PC-9 (cell line): ENCODE measurements at regions of chr2 and their contacts with region 1.

Region 1: DNA sequence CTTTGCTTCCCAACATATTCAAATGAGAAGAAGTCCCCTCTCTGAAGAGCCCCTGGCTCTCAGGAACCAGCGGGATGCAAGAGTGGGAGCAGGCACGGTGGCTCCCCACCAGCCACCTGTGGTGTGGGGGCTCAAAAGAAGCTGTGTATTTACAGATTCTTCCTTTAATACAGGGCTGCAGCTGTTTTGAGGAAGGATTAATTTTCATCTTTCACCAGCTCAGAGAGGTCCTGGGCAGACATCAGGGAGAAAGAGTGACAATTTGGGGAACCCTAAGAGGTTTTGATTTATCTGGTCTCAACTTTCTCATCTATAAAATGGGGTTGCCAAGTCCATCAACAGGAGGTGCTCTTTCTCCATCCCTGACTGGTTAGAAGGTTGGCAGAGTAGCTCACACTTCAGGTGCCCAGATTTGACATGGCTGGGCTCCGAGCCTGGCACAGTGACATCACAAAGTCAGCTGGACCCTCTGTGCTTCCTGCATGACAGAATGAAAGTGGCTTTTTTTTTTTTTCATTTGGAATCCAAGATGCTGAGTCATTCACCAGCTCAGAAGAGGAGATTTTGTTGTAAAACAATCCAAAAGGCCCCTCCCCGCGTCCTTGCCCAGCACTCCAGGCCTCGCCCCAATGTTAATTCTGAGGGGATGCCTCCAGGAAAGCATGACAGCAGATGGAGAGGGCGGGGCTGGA is 15.5 kb upstream of the SIX2 start:
- DNase-seq: peak; percentile 88 to 97
- H3K4me3 ChIP-seq: no peak overlapping the region
- H3K27ac ChIP-seq: no peak overlapping the region
- H3K4me1 ChIP-seq: peaks cover 11% of the 10 kb centered on the region
- H3K27me3 ChIP-seq: no peaks in the 10 kb centered on the region
- CTCF ChIP-seq: peak; percentile 86

Region 2: DNA sequence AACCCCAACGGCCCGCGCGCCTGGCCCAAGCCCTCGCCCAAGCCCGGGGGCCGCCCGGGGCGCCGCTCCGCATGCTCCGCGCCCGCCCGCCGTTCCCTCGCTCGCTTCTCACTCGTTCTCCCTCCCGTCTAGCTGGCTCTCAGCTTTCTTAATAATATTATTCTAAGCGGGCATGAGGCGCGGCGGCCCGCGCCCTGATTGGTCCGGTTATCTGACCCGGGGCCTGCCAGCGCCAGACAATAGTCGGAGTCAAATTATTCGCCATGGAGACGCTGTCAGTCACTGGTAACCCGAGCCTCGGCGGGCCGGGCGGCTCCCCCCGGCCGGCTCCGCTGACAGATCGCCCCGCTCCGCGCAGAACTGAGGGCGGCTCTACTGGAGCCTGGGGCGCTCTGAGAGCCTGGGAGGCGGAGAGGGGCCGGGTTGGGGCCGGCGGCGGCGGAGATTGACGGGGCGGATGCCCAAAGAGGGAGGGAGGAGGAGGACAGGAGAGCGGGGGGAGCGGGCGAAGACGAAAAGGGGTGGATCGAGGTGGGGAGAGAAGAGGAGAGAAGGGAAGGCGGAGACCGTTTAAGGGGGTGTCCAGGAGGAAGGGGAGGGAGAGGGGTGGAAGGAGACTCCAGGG is 15.3 kb before region 1 on chr2 and contains the start of gene SIX2:
- CTCF ChIA-PET with region 1: interaction called, 5 read pairs
- POLR2A ChIA-PET with region 1: interaction called, 16 read pairs
- intact Hi-C with region 1: no loop called
- DNase-seq: peak; percentile 98 to 99
- H3K4me3 ChIP-seq: peak within 1 kb of the TSS; percentile 69
- H3K27ac ChIP-seq: no peak within 1 kb of the TSS
- H3K4me1 ChIP-seq: peaks cover 23% of the 10 kb centered on the region
- H3K27me3 ChIP-seq: no peaks in the 10 kb centered on the region
- CTCF ChIP-seq: no peak
- total RNA-seq, gene SIX2: 10.2 and 11.9 TPM in 2 replicates

Region 3: GRCh38 chr2:45119855-45120254 is 95.1 kb after region 1 on chr2:
- CTCF ChIA-PET with region 1: interaction called, 5 read pairs
- POLR2A ChIA-PET with region 1: interaction called, 15 read pairs
- intact Hi-C with region 1: loop called (anchors 1 kb)
- DNase-seq: peak; percentile 67 to 100
- H3K4me3 ChIP-seq: no peak overlapping the region; the same call in 1 of the 2 replicates
- H3K27ac ChIP-seq: peak overlapping the region; percentile 85
- H3K4me1 ChIP-seq: peaks cover 63% of the 10 kb centered on the region
- H3K27me3 ChIP-seq: no peaks in the 10 kb centered on the region
- CTCF ChIP-seq: no peak

Region 4: DNA sequence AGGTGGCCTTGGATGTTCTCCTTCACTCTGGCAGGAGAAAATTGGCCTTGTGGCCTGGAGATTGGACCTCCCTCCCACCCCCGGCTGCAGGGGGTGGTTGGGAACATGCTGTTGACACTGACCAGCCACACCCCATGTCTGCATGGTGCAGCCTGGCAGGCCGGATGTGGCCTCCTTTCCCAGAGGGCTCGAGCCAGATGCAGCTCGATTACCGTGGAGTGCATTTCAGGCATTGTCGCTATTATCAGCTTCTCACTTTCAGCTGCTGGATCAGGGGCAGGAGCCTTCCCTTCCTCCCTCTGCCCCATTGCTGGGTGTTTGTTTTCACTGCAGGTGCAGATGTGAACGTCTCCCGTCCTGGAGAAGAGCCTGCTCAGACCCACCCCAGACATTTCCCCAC is 195.5 kb after region 1 on chr2:
- CTCF ChIA-PET with region 1: no interaction called
- POLR2A ChIA-PET with region 1: no interaction called
- intact Hi-C with region 1: loop called (anchors 2 kb)
- DNase-seq: peak; percentile 24 to 47
- H3K4me3 ChIP-seq: no peak overlapping the region
- H3K27ac ChIP-seq: no peak overlapping the region
- H3K4me1 ChIP-seq: peaks cover 30% of the 10 kb centered on the region
- H3K27me3 ChIP-seq: no peaks in the 10 kb centered on the region
- CTCF ChIP-seq: no peak

Region 5: GRCh38 chr2:45283764-45284620 is 259.2 kb after region 1 on chr2:
- CTCF ChIA-PET with region 1: no interaction called
- POLR2A ChIA-PET with region 1: no interaction called
- intact Hi-C with region 1: loop called (anchors 2 kb)
- DNase-seq: peak; percentile 79 to 97
- H3K4me3 ChIP-seq: peak overlapping the region; percentile 10; the same call in 1 of the 2 replicates
- H3K27ac ChIP-seq: peak overlapping the region; percentile 94
- H3K4me1 ChIP-seq: peaks cover 62% of the 10 kb centered on the region
- H3K27me3 ChIP-seq: no peaks in the 10 kb centered on the region
- CTCF ChIP-seq: no peak

Region 6: GRCh38 chr2:45439788-45440773 is 415.3 kb after region 1 on chr2:
- CTCF ChIA-PET with region 1: no interaction called
- POLR2A ChIA-PET with region 1: no interaction called
- intact Hi-C with region 1: loop called (anchors 1 kb)
- DNase-seq: no peak
- H3K4me3 ChIP-seq: no peak overlapping the region
- H3K27ac ChIP-seq: no peak overlapping the region
- H3K4me1 ChIP-seq: no peaks in the 10 kb centered on the region
- H3K27me3 ChIP-seq: no peaks in the 10 kb centered on the region
- CTCF ChIP-seq: peak; percentile 33; the same call in 1 of the 2 replicates

Region 7: DNA sequence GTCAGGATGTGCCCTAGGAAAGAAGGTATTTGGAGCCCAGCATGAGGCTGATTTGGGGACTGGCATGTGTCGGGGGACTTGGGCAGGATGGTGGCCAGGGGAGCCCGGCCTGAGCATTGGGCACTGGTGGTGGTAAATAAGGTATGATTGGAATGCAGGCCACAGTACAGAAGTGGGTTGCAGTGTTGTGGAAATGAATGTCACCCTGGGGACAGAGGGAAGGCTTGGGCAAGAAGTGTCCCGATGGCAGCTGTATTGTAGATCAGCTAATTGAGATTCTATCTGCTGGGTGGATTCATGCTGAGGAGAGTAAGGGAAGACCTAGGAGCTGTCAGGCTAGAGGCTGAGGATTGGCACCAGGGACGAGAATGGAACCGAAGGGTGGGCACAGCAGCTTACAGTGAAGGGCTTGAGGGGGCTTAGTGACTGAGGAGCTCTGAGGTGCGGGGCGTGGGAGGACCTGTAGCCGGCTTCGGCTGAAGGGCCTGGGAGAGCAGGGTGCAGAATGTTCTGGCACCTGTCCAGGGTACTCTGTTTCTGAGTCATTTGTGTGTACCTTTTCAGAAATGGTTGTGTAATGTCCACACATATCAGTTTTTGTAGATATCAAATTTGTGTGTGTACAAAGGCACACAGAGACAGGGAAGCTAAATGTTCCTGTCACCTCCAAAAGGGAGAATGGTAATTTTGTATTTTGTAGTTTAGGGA is 797.0 kb after region 1 on chr2:
- CTCF ChIA-PET with region 1: no interaction called
- POLR2A ChIA-PET with region 1: interaction called, 14 read pairs
- intact Hi-C with region 1: no loop called
- DNase-seq: peak; percentile 71 to 90
- H3K4me3 ChIP-seq: peak overlapping the region; percentile 36; the same call in 1 of the 2 replicates
- H3K27ac ChIP-seq: peak overlapping the region; percentile 52
- H3K4me1 ChIP-seq: peaks cover 36% of the 10 kb centered on the region
- H3K27me3 ChIP-seq: no peaks in the 10 kb centered on the region
- CTCF ChIP-seq: no peak